ENCODE measurements at regions of chr3 and their contacts with region 1.

Region 1: DNA sequence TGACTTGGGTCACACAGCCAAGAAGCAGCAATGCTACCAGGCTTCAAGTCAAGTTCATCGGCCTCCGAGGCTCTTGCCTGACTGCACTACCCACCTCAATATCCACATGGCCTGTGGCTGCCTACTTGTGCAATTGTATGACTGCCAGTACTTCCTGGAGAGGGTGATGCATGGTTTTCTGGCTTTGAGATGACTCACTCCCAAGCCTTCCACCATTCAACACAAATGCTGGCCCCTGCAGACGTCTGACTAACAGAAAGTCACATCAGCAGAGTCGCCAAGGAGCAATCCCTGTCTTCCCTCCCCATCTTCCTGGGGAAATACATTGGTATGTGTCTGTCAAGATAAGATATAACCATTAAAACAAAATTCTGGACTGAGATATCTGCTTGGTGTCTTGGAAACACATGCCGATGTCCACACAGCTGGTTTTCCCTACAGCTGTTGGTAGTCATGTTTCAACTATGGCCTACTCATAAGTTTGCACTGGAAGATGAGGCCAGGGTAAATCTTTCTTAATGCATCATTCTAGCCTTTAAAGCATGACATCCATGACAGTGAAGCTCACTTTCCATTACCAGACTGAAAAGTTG is 79.6 kb upstream of the SPATA12 start:
- DNase-seq: no peak
- H3K4me3 ChIP-seq: no peak overlapping the region
- H3K27ac ChIP-seq: no peak overlapping the region
- H3K4me1 ChIP-seq: peaks cover 0 to 4% (median 0%) of the 10 kb centered on the region in 4 experiments; a peak in 3 of 7 replicates
- H3K27me3 ChIP-seq: no peaks in the 10 kb centered on the region
- CTCF ChIP-seq: no peak
- EP300 ChIP-seq: no peak
- POLR2A ChIP-seq: no peak
- RAD21 ChIP-seq: no peak

Region 2: GRCh38 chr3:56702490-56703315 is 278.2 kb before region 1 on chr3:
- CTCF ChIA-PET with region 1: interaction called, 178 read pairs
- POLR2A ChIA-PET with region 1: no interaction called
- DNase-seq: no peak
- H3K4me3 ChIP-seq: no peak overlapping the region
- H3K27ac ChIP-seq: no peak overlapping the region
- H3K4me1 ChIP-seq: no peaks in the 10 kb centered on the region
- H3K27me3 ChIP-seq: no peaks in the 10 kb centered on the region
- CTCF ChIP-seq: peak in 2 of 3 experiments; percentile 56 to 68; a peak in 2 of 4 replicates
- EP300 ChIP-seq: no peak
- POLR2A ChIP-seq: no peak
- RAD21 ChIP-seq: peak; percentile 88

Region 3: GRCh38 chr3:57026918-57027317 is 46.0 kb after region 1 on chr3:
- CTCF ChIA-PET with region 1: no interaction called
- POLR2A ChIA-PET with region 1: no interaction called
- DNase-seq: no peak
- H3K4me3 ChIP-seq: no peak overlapping the region
- H3K27ac ChIP-seq: no peak overlapping the region
- H3K4me1 ChIP-seq: no peaks in the 10 kb centered on the region
- H3K27me3 ChIP-seq: no peaks in the 10 kb centered on the region
- CTCF ChIP-seq: no peak
- EP300 ChIP-seq: no peak
- POLR2A ChIP-seq: no peak
- RAD21 ChIP-seq: no peak